ENCODE measurements at regions of chrX and their contacts with region 1.

Region 1: DNA sequence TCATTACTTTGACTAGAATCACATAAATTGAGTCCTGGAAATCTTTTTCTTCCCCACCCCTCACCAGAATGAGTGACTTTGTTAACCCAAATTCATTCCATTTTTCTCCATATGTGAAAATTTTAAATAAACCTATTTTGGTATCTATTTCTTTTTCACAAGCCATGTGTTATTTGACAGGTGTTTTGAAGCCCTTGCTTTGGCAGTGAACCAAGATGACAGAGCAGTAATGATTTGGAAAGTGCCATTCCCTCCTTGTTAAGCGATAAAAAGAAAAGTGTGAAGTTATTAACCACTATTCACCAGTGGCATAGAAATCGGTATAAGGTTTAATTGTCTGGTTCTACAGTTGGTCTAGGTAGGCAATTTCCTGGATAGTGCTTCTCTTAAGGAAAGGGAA is 66.1 kb downstream of the POLA1 start:
- DNase-seq: no peak
- H3K4me3 Mint-ChIP-seq: no peak overlapping the region
- H3K27ac Mint-ChIP-seq: no peak overlapping the region
- H3K4me1 Mint-ChIP-seq: no peaks in the 10 kb centered on the region
- H3K27me3 Mint-ChIP-seq: no peaks in the 10 kb centered on the region

Region 2: DNA sequence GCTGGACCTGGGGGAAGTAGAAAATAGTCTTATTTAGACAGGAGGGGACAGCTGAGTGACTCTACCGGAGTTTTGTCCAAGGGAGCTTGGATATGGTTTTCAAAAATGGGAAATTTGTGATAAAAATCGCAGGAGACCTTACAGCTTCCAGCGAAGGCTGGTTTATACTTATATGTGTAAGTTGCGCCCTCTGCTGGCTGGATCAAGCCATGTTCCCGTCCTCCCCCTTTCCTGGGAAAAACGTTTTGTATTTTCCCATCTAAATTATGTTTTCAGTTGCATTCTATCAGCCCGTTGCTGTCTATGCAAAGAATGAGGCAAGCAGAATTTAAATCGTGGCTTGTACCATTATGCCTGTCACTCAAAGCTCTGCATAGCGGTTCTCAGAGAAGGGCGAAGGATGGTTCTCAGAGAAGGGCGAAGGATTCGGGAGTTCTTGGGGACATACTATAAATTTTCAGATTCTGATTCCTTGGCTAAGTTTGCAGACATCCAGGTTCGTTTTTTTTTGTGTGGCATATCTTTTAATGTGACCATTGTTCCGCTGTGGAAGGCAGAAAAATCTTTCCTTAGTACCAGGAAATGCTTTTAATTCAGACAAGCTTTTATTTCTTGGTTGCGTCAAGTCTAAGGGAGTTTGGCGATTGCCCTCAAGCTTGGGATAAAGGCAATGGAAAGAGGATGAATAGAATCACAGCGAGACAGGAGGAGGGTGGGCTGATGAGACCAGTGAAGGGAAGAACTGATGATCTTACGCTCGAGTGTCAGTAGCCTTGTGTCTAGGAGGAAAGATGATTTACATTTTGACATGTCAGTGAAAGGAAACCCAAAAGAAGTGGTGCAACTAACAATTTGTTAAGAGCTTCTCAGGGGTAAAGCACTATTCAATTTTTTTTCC is 384.5 kb after region 1 on chrX:
- CTCF ChIA-PET with region 1: no interaction called
- intact Hi-C with region 1: loop called (anchors 5 kb)
- DNase-seq: peak; percentile 51
- H3K4me3 Mint-ChIP-seq: no peak overlapping the region
- H3K27ac Mint-ChIP-seq: no peak overlapping the region
- H3K4me1 Mint-ChIP-seq: no peaks in the 10 kb centered on the region
- H3K27me3 Mint-ChIP-seq: peaks cover 2% of the 10 kb centered on the region

Measured in activated naive CD4-positive, alpha-beta T cell treated with anti-CD3 and anti-CD28 coated beads for 36 hours (primary cell).